Heart right ventricle (tissue), 16 donors: ENCODE measurements at regions of chr15 and their contacts with region 1.

Region 1: GRCh38 chr15:64702816-64703646 is 72.4 kb downstream of the RBPMS2 start:
- DNase-seq: peak; percentile 98 to 99
- ATAC-seq: peak; percentile 93 to 97 (median 95)
- H3K4me3 ChIP-seq: peak overlapping the region; percentile 63 to 96 (median 88)
- H3K27ac ChIP-seq: peak overlapping the region; percentile 46 to 97 (median 90)
- H3K4me1 ChIP-seq: peaks cover 27 to 53% (median 49%) of the 10 kb centered on the region in 9 donors
- H3K27me3 ChIP-seq: no peaks in the 10 kb centered on the region
- CTCF ChIP-seq: peak in 2 of 9 donors; percentile 4 to 19

Region 2: GRCh38 chr15:64717735-64718495 is 14.9 kb after region 1 on chr15:
- intact Hi-C with region 1: loop called in 2 of 10 experiments (anchors 2 kb)
- DNase-seq: peak in 1 of 2 donors; percentile 54
- ATAC-seq: peak; percentile 36 to 75 (median 54)
- H3K4me3 ChIP-seq: peak overlapping the region in 8 of 10 donors; percentile 9 to 43 (median 25)
- H3K27ac ChIP-seq: peak overlapping the region; percentile 83 to 97 (median 89)
- H3K4me1 ChIP-seq: peaks cover 15 to 43% (median 29%) of the 10 kb centered on the region in 9 donors
- H3K27me3 ChIP-seq: no peaks in the 10 kb centered on the region
- CTCF ChIP-seq: no peak

Region 3: DNA sequence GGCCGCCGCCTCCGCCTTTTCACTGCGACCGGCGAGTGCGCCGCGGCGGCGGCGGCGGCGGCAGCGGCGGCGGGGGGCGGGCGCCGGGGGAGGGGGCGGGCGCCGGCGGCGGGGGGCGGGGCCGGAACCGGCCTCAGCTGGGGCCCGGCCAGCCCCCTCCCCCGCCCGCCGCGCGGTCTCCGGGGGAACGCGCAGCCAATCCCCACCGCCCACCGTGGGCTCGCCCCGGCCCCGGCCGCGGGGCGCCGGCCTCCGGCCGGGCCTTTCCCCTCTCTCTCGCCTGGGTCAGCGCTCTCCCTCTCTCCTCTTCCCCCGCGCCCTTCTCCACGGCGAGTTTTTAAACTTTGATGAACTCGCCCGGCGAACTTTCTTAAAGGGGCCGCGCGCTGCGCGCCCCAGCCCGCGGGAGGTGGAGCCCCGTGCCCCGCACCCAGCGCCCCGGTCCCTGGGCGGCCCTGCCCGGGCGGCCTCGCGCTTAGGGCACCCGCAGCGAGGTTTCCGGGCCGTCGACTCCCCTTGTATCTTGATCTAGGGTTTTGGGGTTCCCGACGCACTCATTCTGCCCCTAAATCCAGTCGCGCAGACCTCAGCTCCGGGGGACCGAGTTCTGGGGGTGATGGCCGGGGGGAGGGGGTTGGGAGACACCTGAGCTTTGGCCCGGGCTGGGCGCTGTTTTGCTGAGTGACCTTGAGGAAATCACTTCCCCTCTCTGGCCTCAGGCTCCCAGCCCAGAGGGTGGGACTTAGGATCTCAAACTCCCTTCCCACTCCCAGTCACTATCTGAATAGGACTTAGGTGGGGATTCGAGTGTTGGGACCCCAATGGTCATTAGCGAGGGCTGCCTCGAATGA is 72.7 kb after region 1 on chr15 and contains the start of gene RBPMS2:
- intact Hi-C with region 1: loop called in 1 of 10 experiments (anchors 2 kb)
- DNase-seq: peak; percentile 39 to 68
- ATAC-seq: peak; percentile 52 to 82 (median 66)
- H3K4me3 ChIP-seq: peak within 1 kb of the TSS; percentile 44 to 92 (median 67)
- H3K27ac ChIP-seq: peak within 1 kb of the TSS; percentile 81 to 96 (median 94)
- H3K4me1 ChIP-seq: peaks cover 0 to 44% (median 18%) of the 10 kb centered on the region in 9 donors
- H3K27me3 ChIP-seq: peaks cover 0 to 47% (median 0%) of the 10 kb centered on the region in 7 donors
- CTCF ChIP-seq: no peak
- total RNA-seq, gene RBPMS2: 177 to 296 (median 213) TPM